Activated CD4-positive, alpha-beta T cell treated with anti-CD3 and anti-CD28 coated beads for 36 hours (primary cell): ENCODE measurements at regions of chr15 and their contacts with region 1.

Region 1: DNA sequence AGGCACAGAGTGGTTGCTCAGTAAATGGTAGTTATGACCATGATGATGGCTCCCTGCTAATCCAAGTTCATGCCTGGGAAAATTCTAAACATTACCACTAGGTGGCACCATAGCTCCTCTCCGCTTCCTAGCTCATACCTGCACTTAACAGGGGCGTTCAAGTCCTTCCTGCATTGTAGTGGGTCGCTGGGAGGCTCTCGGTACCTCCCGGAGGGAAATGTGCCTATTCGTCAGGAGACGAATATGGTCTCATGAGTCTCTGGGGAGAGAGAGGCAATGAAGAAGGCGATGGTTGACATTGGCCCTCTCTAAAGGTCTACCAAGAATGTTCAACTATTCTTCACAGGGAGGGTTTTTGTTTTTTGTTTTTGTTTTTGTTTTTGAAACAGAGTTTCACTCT is 10.9 kb downstream of the MESP1 start:
- DNase-seq: peak; percentile 68
- ATAC-seq: peak; percentile 99
- H3K4me3 Mint-ChIP-seq: no peak overlapping the region
- H3K27ac Mint-ChIP-seq: no peak overlapping the region
- H3K4me1 Mint-ChIP-seq: no peaks in the 10 kb centered on the region
- H3K27me3 Mint-ChIP-seq: peaks cover 5% of the 10 kb centered on the region

Region 2: DNA sequence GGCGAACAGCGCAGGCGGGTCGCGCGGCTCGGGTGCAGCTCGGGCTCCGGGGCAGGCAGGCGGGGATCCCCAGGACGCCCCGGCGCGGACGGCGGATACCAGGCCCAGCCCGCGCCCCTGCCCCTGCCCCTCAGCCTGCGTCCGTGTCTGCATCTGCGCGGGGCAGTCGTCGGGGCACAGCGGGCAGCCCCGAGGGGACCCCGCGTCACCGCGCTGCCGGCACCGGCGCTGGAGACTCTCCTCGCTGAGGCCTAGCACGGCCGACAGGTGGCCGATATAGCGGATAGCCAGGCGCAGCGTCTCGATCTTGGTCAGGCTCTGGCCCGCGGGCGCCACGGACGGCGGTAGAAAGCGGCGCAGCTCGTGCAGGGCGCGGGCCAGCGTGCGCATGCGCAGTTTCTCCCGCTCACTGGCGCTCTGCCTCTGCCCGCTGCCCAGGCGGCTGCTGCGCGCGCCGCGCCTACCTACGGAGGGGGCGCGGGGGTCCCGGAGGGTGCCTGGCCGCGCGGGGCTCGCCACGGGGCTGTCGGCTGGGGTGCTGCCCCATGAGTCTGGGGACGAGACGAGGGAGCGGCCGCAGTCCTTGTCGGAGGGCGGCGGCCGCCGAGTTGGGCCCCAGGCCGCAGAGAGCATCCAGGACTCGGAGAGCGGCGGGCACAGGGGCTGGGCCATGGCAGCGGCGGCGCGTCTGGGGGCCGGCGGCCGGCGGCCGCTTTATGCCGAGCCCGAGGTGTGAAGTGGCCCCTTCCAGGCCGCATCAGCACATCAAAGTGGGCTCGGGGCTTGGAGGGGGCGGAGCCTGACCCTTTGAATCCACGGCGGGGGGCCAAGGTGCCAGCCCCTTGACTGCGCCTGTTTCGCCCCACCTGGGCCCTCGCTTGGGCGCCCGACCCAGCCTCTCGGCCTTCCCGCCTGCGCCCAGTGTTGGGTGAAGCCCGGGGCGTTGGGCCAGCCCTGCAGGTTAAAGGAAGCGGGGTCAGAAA is 10.7 kb after region 1 on chr15 and contains the start of gene MESP1:
- CTCF ChIA-PET with region 1: interaction called, 41 read pairs
- POLR2A ChIA-PET with region 1: no interaction called
- intact Hi-C with region 1: no loop called
- DNase-seq: peak; percentile 93
- ATAC-seq: peak; percentile 94
- H3K4me3 Mint-ChIP-seq: peak within 1 kb of the TSS; percentile 73
- H3K27ac Mint-ChIP-seq: no peak within 1 kb of the TSS
- H3K4me1 Mint-ChIP-seq: peaks cover 4% of the 10 kb centered on the region
- H3K27me3 Mint-ChIP-seq: peaks cover 11% of the 10 kb centered on the region
- total RNA-seq, gene MESP1: 2.9 to 4.6 TPM

Region 3: DNA sequence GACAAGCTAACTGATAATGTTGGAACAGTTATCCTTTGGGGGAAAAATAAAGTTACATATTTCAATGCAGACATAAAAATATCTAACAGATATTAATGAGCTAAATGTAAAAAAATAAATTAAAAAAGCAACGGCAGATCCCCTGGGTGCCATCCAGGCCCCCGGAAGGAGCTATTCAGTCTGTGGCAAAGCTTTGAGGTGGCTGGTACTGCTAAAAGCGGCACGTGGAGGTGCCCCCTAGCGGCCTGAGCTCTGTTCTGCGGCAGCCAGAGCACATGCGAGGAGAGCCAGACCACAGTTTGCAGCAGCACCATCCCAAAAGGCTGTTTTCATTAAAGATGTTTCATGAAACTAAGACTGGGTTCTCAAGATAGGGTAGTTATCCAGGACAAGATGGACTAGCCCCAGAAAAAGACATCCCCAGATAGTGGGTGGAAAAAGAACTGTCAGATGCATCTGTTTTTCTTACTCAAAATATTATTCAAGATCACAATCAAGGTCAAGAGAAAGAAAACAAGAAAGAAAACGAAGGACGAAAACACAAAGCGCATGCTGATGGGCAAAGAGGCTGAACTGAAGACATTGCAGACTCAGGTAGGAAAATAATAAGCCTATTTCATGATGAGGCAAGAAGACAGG is 134.9 kb after region 1 on chr15:
- CTCF ChIA-PET with region 1: interaction called, 55 read pairs
- POLR2A ChIA-PET with region 1: no interaction called
- intact Hi-C with region 1: loop called (anchors 1 kb)
- DNase-seq: peak; percentile 92
- ATAC-seq: peak; percentile 100
- H3K4me3 Mint-ChIP-seq: no peak overlapping the region
- H3K27ac Mint-ChIP-seq: peak overlapping the region; percentile 51
- H3K4me1 Mint-ChIP-seq: peaks cover 4% of the 10 kb centered on the region
- H3K27me3 Mint-ChIP-seq: no peaks in the 10 kb centered on the region

Region 4: GRCh38 chr15:90071208-90071807 is 331.2 kb after region 1 on chr15:
- CTCF ChIA-PET with region 1: interaction called, 3 read pairs
- POLR2A ChIA-PET with region 1: no interaction called
- intact Hi-C with region 1: loop called (anchors 1 to 5 kb)
- DNase-seq: peak; percentile 90
- ATAC-seq: peak; percentile 88
- H3K4me3 Mint-ChIP-seq: no peak overlapping the region
- H3K27ac Mint-ChIP-seq: peak overlapping the region; percentile 47
- H3K4me1 Mint-ChIP-seq: peaks cover 21% of the 10 kb centered on the region
- H3K27me3 Mint-ChIP-seq: no peaks in the 10 kb centered on the region